Pancreas (tissue), 10 donors: ENCODE measurements at regions of chr3 and their contacts with region 1.

Region 1: GRCh38 chr3:10876661-10877060 is 60.6 kb downstream of the SLC6A11 start:
- DNase-seq: no peak
- ATAC-seq: no peak
- H3K4me3 ChIP-seq: no peak overlapping the region
- H3K27ac ChIP-seq: no peak overlapping the region
- H3K4me1 ChIP-seq: no peaks in the 10 kb centered on the region
- H3K27me3 ChIP-seq: no peaks in the 10 kb centered on the region
- CTCF ChIP-seq: no peak

Region 2: GRCh38 chr3:10518506-10519150 is 358.0 kb before region 1 on chr3:
- intact Hi-C with region 1: no loop called
- DNase-seq: peak in 1 of 6 donors; percentile 50
- ATAC-seq: no peak
- H3K4me3 ChIP-seq: no peak overlapping the region
- H3K27ac ChIP-seq: no peak overlapping the region
- H3K4me1 ChIP-seq: no peaks in the 10 kb centered on the region
- H3K27me3 ChIP-seq: no peaks in the 10 kb centered on the region
- CTCF ChIP-seq: no peak

Region 3: GRCh38 chr3:10738688-10739372 is 137.8 kb before region 1 on chr3:
- intact Hi-C with region 1: no loop called
- DNase-seq: peak; percentile 33 to 91 (median 74)
- ATAC-seq: peak; percentile 68 to 94 (median 90)
- H3K4me3 ChIP-seq: peak overlapping the region in 2 of 4 donors; percentile 28 to 34
- H3K27ac ChIP-seq: no peak overlapping the region
- H3K4me1 ChIP-seq: no peaks in the 10 kb centered on the region
- H3K27me3 ChIP-seq: peaks cover 0 to 5% (median 2%) of the 10 kb centered on the region in 4 donors
- CTCF ChIP-seq: peak; percentile 73 to 93 (median 86)

Region 4: DNA sequence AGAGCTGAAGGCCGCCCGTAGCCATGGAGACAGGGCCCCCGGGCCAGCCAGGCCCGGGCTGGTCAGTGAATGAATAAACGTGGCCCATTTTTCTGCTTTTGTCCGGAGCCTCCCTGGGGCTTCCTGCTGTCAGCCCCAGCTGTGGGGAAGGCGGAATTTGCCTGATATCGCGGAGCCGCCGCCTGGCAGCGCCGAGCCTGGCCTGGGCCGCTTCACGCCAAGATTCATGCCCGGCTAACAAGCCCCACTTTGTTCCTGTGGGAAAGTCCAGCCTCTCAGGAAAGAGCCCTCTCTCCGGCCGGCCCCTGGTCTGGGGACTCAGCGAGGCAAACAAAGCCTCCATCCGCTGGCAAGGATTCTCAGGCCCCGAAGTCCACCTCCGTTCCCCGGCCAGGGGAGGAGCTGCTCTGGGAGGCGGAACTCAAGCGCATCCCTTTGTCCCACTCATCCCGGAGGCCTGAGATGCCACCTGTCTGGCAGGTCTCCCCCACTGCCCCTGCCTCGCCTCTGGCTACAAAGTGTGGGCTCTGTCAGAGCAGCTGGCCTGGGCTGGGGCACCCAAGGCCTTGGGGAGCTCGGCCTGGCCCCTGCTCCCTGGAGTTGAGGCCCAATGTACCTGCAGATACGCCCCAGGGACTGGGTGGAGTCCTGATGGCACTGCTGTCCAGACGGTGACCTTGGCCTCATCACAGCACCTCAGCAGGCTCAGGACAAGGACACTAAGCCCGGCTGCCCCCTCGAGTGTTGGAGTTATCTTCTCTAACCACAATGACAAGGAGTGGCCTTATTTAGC is 112.2 kb before region 1 on chr3:
- intact Hi-C with region 1: loop called in 1 of 3 experiments (anchors 5 kb)
- DNase-seq: peak in 1 of 6 donors; percentile 34
- ATAC-seq: no peak
- H3K4me3 ChIP-seq: no peak overlapping the region
- H3K27ac ChIP-seq: no peak overlapping the region
- H3K4me1 ChIP-seq: no peaks in the 10 kb centered on the region
- H3K27me3 ChIP-seq: no peaks in the 10 kb centered on the region
- CTCF ChIP-seq: no peak

Region 5: GRCh38 chr3:11662402-11662990 is 785.8 kb after region 1 on chr3:
- intact Hi-C with region 1: no loop called
- DNase-seq: no peak
- ATAC-seq: peak in 1 of 4 donors; percentile 21
- H3K4me3 ChIP-seq: no peak overlapping the region
- H3K27ac ChIP-seq: peak overlapping the region in 2 of 4 donors; percentile 53 to 66
- H3K4me1 ChIP-seq: peaks cover 13 to 30% (median 18%) of the 10 kb centered on the region in 3 donors
- H3K27me3 ChIP-seq: no peaks in the 10 kb centered on the region
- CTCF ChIP-seq: peak in 2 of 4 donors; percentile 9 to 18